K562 (cell line): ENCODE measurements at regions of chr9 and their contacts with region 1.

Region 1: DNA sequence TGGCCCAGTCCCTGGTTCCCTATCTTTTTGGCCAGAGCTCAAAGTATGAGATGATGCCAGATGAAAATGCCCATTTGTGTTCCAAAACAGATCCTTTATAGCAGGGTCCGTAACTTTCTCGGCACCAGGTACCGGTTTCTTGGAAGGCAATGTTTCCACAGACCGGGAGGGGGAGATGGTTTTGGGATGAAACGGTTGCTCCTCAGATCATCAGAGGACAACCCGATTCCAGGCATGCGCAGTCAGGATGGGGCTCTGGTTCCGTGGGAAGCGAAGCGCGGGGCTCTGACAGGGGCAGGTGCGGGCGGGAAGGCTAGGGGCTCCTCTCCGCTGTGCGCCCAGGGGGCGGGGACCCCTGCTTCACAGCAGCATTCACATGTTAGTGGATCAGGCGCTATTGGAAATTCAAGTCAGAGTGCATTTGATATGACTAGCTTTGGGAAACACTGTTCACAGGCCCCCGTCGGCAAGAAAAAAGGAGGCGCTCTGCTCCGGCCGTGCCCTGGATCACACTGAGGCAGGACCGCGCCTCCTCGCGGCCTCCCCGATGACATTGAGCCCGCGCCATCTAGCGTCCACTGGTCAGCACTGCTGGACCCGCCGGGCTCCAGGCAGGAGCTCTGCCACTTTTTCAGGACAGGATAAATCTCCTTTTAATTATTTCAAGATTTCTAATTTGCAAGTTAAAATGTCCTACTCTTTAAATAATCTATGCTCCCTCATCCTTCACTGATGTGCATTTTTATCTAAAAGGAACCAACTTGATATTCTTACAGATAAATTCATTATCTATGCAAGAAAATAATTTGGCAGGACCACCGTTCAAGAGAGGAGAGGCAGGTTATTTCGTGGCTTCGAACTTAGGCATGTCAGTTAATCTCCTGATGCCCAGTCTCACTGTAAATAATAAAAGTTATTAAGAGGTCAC is 190.0 kb downstream of the FANCC start:
- DNase-seq: peak; percentile 81 to 82 (median 82)
- ATAC-seq: peak; percentile 99
- H3K4me3 ChIP-seq: no peak overlapping the region
- H3K27ac ChIP-seq: no peak overlapping the region
- H3K4me1 ChIP-seq: peaks cover 0 to 6% of the 10 kb centered on the region in 2 experiments; a peak in 2 of 5 replicates
- H3K27me3 ChIP-seq: no peaks in the 10 kb centered on the region
- CTCF ChIP-seq: peak; percentile 96 to 99 (median 99)
- EP300 ChIP-seq: no peak
- POLR2A ChIP-seq: no peak
- RAD21 ChIP-seq: peak; percentile 81 to 90

Region 2: GRCh38 chr9:94108584-94108983 is 1018.9 kb before region 1 on chr9:
- CTCF ChIA-PET with region 1: no interaction called
- POLR2A ChIA-PET with region 1: no interaction called
- in situ Hi-C with region 1: no loop called
- intact Hi-C with region 1: no loop called
- DNase-seq: no peak
- ATAC-seq: no peak
- H3K4me3 ChIP-seq: no peak overlapping the region
- H3K27ac ChIP-seq: no peak overlapping the region
- H3K4me1 ChIP-seq: peaks cover 13 to 34% of the 10 kb centered on the region in 2 experiments
- H3K27me3 ChIP-seq: no peaks in the 10 kb centered on the region
- CTCF ChIP-seq: no peak
- EP300 ChIP-seq: no peak
- POLR2A ChIP-seq: no peak
- RAD21 ChIP-seq: no peak

Region 3: DNA sequence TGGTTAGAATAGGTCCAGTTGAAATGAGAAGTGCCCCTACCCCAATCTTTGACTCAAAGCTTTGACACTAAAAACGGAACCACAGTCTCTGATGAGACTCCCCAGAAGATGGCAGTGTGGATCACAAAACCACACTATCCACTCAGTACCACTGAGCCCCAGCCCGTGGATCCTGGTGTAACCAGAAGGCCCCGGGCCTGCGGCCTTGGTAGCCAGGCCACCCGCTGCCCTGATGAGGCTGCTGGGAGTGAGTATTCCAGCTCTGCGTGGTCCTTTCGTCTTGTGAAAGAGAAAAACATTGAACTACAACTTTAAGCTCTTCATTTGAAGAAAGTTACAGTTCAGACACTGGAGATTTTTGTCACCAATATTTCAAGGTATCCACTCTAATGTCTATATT is 446.0 kb before region 1 on chr9:
- CTCF ChIA-PET with region 1: interaction called, 18 read pairs
- POLR2A ChIA-PET with region 1: interaction called, 3 read pairs
- in situ Hi-C with region 1: loop called (anchors 5 kb)
- intact Hi-C with region 1: loop called (anchors 1 kb)
- DNase-seq: peak; percentile 39 to 72 (median 55)
- ATAC-seq: peak; percentile 97
- H3K4me3 ChIP-seq: no peak overlapping the region
- H3K27ac ChIP-seq: no peak overlapping the region
- H3K4me1 ChIP-seq: no peaks in the 10 kb centered on the region
- H3K27me3 ChIP-seq: peaks cover 21 to 32% of the 10 kb centered on the region in 2 experiments; a peak in 4 of 5 replicates
- CTCF ChIP-seq: peak; percentile 77 to 78 (median 78)
- EP300 ChIP-seq: no peak
- POLR2A ChIP-seq: no peak
- RAD21 ChIP-seq: peak; percentile 83 to 90